ENCODE measurements at regions of chr16 and their contacts with region 1.

Region 1: DNA sequence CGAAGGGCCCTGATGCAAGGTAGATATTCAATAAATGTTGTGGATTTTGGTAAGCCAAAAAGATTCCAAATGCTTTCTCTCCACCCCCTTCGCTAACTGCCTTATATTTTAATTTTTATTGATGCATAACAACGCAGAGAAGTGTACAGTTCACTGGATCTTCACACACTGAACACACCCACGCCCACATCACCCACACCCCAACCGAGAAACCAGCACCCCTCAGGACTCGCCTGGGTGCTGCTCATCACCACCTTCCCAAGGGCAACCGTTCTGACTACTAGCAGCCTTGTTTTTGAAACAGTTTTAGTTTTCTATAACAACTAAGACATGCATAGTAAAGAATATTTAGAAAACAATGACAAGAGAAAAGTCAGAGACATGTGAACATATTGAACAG is 9.1 kb upstream of the PLCG2 start:
- DNase-seq: peak; percentile 43 to 53
- ATAC-seq: peak; percentile 58 to 77 (median 60)
- H3K4me3 ChIP-seq: no peak overlapping the region
- H3K4me3 Mint-ChIP-seq: peak overlapping the region; percentile 73
- H3K27ac ChIP-seq: peak overlapping the region; percentile 59
- H3K27ac Mint-ChIP-seq: peak overlapping the region; percentile 86 to 93
- H3K4me1 ChIP-seq: peaks cover 55% of the 10 kb centered on the region
- H3K4me1 Mint-ChIP-seq: peaks cover 30 to 37% of the 10 kb centered on the region in 2 donors
- H3K27me3 ChIP-seq: no peaks in the 10 kb centered on the region
- H3K27me3 Mint-ChIP-seq: no peaks in the 10 kb centered on the region
- CTCF ChIP-seq: no peak

Region 2: DNA sequence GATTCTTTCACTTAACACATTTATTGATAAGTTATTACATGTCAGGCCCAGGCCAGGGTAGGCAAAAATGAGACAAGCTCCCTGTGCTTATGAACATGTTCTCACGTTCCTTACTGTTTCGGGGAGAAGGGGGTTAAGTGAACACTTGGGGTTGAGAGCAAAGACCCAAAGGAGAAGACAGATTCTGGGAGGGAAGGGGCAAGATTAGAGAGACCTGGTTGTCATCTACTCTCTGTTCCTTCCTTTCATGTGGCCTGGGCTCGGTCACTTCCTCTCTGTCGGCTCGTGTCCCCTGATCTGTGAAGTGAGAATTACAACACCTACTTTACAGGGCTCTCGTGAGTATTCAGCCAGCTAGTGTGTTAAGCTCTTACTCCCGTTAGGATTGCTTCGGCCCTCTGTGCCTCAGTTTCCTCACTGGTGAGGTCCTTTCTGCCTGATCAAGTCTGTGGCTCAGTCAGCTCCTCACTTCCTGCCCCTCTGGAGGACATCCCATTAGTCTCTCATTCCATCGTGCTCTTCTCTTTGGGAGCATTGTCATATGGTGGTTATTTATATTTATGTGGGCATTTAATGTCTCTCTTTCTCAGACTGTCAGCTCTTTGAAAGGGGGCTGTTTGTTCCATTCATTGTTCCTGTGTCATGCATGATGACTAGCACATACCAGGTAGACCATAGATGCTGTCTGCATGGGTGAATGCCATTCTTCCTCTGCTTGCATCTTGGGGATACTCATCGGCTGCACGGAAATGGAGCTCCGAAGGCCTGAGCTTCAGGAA is 48.0 kb after region 1 on chr16:
- intact Hi-C with region 1: loop called (anchors 2 kb)
- DNase-seq: peak; percentile 68 to 69
- ATAC-seq: peak; percentile 67 to 90 (median 79)
- H3K4me3 ChIP-seq: no peak overlapping the region
- H3K4me3 Mint-ChIP-seq: peak overlapping the region; percentile 82
- H3K27ac ChIP-seq: peak overlapping the region; percentile 99
- H3K27ac Mint-ChIP-seq: peak overlapping the region; percentile 98 to 99
- H3K4me1 ChIP-seq: peaks cover 97% of the 10 kb centered on the region
- H3K4me1 Mint-ChIP-seq: peaks cover 76 to 80% of the 10 kb centered on the region in 2 donors
- H3K27me3 ChIP-seq: no peaks in the 10 kb centered on the region
- H3K27me3 Mint-ChIP-seq: no peaks in the 10 kb centered on the region
- CTCF ChIP-seq: no peak

Measured in natural killer cell (primary cell).